Left cardiac atrium (tissue), 4 donors: ENCODE measurements at regions of chr15 and their contacts with region 1.

Region 1: DNA sequence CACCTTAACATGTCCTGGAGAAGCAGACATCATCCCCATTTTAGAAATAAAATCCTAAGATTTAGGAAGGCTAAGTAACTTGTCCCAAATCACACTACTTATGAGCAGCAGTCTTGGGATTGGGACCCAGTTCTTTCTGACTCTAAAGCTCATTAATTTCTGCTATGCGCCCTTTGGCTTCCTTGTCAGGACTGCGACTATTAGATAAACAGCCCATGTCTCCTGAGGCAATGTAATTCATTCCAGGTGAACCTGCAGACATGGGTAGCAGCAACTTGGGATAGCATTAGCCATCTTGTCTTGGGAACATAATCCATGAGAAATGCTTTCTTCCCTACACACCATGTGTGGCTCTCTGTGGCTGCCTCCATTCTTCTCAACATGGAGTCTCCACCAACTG is 32.3 kb upstream of the FBN1 start:
- DNase-seq: no peak
- ATAC-seq: no peak

Region 2: DNA sequence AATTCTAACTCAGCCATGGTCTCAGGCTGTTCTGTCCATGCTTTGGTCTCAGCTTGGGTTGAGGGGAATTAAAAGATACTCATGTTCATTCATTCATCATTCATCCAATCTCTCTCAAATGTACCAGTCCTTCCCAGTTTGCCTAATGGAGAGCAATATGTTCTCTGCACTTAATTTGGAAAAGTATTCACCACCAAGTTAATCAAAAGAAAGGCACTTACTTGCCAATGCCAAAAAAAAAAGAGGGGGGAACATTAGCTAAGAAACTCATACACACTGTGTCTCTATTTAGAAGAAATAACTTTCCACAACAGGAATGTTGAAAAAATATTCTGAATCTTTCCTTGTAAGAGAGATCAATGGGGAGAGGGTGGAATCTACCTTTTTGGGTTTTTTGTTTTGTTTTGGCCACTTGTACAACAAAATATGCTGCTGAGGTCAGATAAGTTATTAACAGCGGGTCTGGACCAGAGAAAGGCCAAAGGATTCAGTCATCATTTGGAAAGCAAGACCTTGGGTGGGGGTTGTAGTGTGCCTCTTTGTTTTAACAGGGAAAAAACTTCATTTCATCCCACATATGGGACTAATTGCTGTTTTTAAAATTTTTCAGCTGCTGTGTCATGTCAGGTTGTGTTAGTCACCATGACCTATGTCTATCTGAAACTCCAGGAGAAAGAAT is 184.6 kb before region 1 on chr15:
- intact Hi-C with region 1: no loop called
- DNase-seq: no peak
- ATAC-seq: peak in 1 of 2 donors; percentile 90

Region 3: DNA sequence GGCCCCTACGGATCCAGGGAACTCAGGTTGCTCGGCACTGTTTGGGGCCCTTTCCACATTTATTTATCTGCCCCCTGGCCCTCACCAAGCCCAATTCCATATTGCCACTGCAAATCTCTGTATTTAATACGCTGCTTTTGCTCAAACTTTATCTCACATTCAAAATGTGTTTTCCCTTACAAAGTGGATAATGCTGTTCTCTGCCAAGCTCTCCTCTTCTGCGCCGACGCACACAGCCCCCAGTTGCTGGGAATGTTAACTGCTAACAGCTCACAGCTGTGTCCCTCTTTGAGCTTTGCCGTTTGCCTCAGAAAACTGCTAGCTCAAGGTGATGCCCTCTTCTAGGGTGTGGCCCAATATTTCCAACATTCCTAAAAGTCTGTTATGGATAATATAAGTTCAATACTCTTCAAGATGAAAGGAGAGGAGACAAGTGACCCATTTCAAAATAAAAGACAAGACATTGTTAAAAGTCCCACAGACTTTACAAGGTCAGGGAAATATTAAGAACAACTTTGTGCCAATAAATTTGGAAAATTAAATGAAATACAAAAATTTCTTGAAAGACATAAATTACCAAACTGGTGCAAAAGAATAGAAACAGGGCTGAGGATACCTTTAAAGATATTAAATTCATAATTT is 19.8 kb before region 1 on chr15:
- intact Hi-C with region 1: loop called in 1 of 2 experiments (anchors 2 kb)
- DNase-seq: no peak
- ATAC-seq: peak; percentile 68 to 70